Common myeloid progenitor, CD34-positive (primary cell): ENCODE measurements at regions of chr1 and their contacts with region 1.

Region 1: GRCh38 chr1:2135441-2135841 is 59.1 kb downstream of the FAAP20 start:
- DNase-seq: no peak
- H3K4me3 ChIP-seq: no peak overlapping the region
- H3K27ac ChIP-seq: no peak overlapping the region
- H3K4me1 ChIP-seq: peaks cover 0 to 22% (median 13%) of the 10 kb centered on the region in 4 experiments
- H3K27me3 ChIP-seq: no peaks in the 10 kb centered on the region

Region 2: GRCh38 chr1:2112280-2112701 is 23.1 kb before region 1 on chr1:
- CTCF ChIA-PET with region 1: interaction called, 14 read pairs
- POLR2A ChIA-PET with region 1: no interaction called
- DNase-seq: peak in 2 of 3 donors; percentile 43 to 48
- H3K4me3 ChIP-seq: peak overlapping the region in 2 of 7 experiments; percentile 32 to 42
- H3K27ac ChIP-seq: no peak overlapping the region
- H3K4me1 ChIP-seq: peaks cover 0 to 11% (median 5%) of the 10 kb centered on the region in 4 experiments
- H3K27me3 ChIP-seq: peaks cover 0 to 3% (median 0%) of the 10 kb centered on the region in 5 experiments